BJ (cell line): ENCODE measurements at regions of chr12 and their contacts with region 1.

Region 1: DNA sequence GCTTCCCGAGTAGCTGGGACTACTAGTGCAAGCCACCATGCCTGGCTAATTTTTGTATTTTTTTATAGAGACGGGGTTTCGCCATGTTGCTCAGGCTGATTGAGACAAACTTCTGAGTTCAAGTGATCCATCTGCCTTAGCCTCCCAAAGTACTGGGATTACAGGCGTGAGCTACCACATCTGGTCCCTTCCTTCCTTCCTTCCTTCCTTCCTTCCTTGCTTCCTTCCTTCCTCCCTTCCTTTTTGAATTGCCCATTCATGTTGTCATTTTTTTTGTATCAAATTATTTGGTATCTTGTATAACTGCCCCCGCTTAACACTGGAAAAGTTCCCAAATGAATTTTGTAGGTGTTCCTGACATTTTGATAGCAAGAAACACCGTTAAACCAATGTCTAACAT is 11.7 kb downstream of the RAD9B start:
- DNase-seq: no peak
- H3K4me3 ChIP-seq: no peak overlapping the region
- H3K27me3 ChIP-seq: 0 out of 2 replicates have a peak, but pooled peaks cover 1% of the 10 kb centered on the region
- CTCF ChIP-seq: no peak

Region 2: DNA sequence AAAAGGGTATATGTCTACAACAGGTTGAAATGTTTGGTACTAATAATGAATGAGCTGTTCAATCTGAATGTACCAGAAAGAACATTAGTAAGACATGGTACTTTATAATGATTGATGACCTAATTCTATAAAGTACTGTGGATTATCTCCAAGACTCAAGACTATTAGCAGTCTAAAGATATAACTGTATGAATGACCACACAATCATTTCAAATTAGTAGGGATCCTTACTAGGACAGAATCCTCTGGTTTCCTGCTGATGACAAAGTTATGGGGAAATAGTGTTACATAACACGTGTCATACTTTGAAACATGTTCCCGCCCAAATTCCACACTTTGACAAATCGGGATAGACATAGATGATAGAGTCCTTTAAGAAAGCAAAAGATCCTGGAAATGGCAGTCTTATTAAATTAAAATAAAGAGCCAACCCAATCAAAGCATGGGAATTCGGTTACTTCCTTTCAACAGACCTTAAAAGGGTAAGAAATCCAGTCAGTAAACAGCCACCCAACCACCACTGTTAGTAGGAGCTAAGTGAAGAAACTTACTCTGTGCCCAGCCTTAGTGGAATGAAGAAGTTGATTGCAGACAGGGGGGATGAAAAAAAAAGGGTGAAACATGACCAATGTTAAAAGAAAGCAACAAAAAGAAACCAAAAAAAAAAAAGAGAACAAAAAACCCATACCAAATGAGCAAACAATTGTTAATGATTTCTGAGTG is 14.7 kb before region 1 on chr12:
- CTCF ChIA-PET with region 1: no interaction called
- POLR2A ChIA-PET with region 1: no interaction called
- DNase-seq: no peak
- H3K4me3 ChIP-seq: no peak overlapping the region
- H3K27me3 ChIP-seq: no peaks in the 10 kb centered on the region
- CTCF ChIP-seq: no peak

Region 3: GRCh38 chr12:110528277-110528839 is 14.5 kb after region 1 on chr12:
- CTCF ChIA-PET with region 1: interaction called, 13 read pairs
- POLR2A ChIA-PET with region 1: no interaction called
- DNase-seq: no peak
- H3K4me3 ChIP-seq: no peak overlapping the region
- H3K27me3 ChIP-seq: no peaks in the 10 kb centered on the region
- CTCF ChIP-seq: no peak